ENCODE measurements at regions of chr9 and their contacts with region 1.

Region 1: GRCh38 chr9:129177791-129178559 is at the start of gene IER5L:
- DNase-seq: peak; percentile 96
- ATAC-seq: peak; percentile 85
- H3K4me3 Mint-ChIP-seq: peak within 1 kb of the TSS; percentile 82
- H3K27ac Mint-ChIP-seq: peak within 1 kb of the TSS; percentile 63
- H3K4me1 Mint-ChIP-seq: peaks cover 9% of the 10 kb centered on the region
- H3K27me3 Mint-ChIP-seq: peaks cover 9% of the 10 kb centered on the region
- total RNA-seq, gene IER5L: 4.9 to 6.1 TPM

Region 2: GRCh38 chr9:129139993-129140396 is 38.0 kb before region 1 on chr9:
- CTCF ChIA-PET with region 1: interaction called, 249 read pairs
- DNase-seq: peak; percentile 93
- ATAC-seq: peak; percentile 86
- H3K4me3 Mint-ChIP-seq: peak overlapping the region; percentile 75
- H3K27ac Mint-ChIP-seq: peak overlapping the region; percentile 97
- H3K4me1 Mint-ChIP-seq: peaks cover 45% of the 10 kb centered on the region
- H3K27me3 Mint-ChIP-seq: no peaks in the 10 kb centered on the region

Region 3: DNA sequence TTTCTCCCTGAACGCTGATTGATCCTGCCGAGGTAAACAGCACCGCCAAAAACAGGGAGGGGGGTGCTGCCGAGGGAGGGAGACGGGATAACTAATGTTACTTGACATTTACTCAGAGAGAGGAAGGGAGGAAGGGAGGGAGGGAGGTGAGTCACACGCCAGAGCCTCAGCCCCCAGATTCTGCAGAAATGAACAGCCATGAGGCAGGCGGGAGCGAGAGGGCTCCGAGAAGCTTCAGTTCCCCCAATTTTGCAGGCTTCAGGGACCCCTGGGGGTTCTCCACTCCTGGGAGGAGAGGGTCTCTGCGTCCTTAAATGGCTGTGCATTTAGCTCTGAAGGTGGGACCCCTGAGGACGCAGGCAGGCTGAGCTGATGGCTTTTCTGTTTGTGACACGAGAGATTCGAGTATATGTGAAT is 59.2 kb after region 1 on chr9:
- CTCF ChIA-PET with region 1: interaction called, 28 read pairs
- DNase-seq: peak; percentile 66
- ATAC-seq: peak; percentile 68
- H3K4me3 Mint-ChIP-seq: peak overlapping the region; percentile 57
- H3K27ac Mint-ChIP-seq: peak overlapping the region; percentile 82
- H3K4me1 Mint-ChIP-seq: peaks cover 53% of the 10 kb centered on the region
- H3K27me3 Mint-ChIP-seq: no peaks in the 10 kb centered on the region

Region 4: GRCh38 chr9:129335464-129336122 is 157.6 kb after region 1 on chr9:
- CTCF ChIA-PET with region 1: no interaction called
- DNase-seq: no peak
- ATAC-seq: no peak
- H3K4me3 Mint-ChIP-seq: no peak overlapping the region
- H3K27ac Mint-ChIP-seq: no peak overlapping the region
- H3K4me1 Mint-ChIP-seq: peaks cover 2% of the 10 kb centered on the region
- H3K27me3 Mint-ChIP-seq: peaks cover 22% of the 10 kb centered on the region

Region 5: DNA sequence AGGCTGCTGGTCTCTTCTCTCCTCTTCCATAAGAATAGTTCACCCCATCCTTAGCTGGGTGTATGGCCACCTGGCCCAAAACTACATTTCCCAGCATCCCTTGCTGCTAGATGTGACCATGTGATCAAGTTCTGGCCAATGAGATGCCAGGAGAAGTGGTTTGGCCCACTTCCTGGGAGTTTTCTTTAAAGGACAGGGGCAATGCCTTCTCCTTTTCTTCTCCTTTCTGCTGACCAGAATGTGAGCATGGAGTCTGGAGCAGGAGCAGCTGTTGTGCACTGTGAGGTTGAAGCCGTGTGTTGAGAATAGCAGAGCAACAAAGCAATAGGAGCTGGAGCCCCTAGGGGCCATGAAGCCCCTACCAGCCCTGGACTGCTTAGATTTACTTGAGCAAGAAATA is 406.2 kb after region 1 on chr9:
- CTCF ChIA-PET with region 1: interaction called, 12 read pairs
- DNase-seq: peak; percentile 86
- ATAC-seq: peak; percentile 59
- H3K4me3 Mint-ChIP-seq: no peak overlapping the region
- H3K27ac Mint-ChIP-seq: peak overlapping the region; percentile 85
- H3K4me1 Mint-ChIP-seq: peaks cover 67% of the 10 kb centered on the region
- H3K27me3 Mint-ChIP-seq: peaks cover 5% of the 10 kb centered on the region

Region 6: DNA sequence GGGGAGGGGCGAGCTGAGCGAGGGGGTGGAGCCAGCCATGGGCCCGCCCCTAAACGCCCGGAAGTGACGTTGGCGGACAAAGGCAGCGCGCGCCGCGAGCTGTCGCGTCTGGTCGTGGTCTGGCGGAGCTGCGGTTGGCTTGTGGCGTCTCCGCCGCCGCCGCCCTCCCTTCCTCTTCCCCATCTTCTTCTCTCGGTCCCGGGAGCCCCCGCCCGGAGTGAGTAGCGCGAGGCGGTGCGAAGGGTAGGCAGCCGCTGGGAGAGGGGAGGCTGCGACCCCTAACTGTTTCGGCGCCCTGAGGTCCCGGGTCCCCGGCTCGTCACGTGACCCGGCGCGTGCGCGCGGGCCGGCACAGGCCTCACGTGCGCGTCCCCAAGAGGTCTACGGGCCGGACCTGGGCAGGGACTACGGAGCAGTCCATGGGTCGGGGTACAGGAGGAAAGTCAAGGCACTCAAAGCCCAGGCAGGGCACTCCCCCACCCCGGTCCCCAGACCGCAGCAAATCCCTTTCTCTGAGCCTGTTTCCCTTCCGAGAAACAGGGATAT is 448.2 kb after region 1 on chr9 and contains the start of gene NTMT1:
- CTCF ChIA-PET with region 1: interaction called, 41 read pairs
- DNase-seq: peak; percentile 91
- ATAC-seq: peak; percentile 74
- H3K4me3 Mint-ChIP-seq: peak within 1 kb of the TSS; percentile 80
- H3K27ac Mint-ChIP-seq: peak within 1 kb of the TSS; percentile 93
- H3K4me1 Mint-ChIP-seq: peaks cover 62% of the 10 kb centered on the region
- H3K27me3 Mint-ChIP-seq: peaks cover 8% of the 10 kb centered on the region
- total RNA-seq, gene NTMT1: 37.2 to 46.2 TPM

Measured in activated CD8-positive, alpha-beta memory T cell treated with anti-CD3 and anti-CD28 coated beads, Interleukin-2, amount 10 ng/mL, durations not matched to agents 7 days and 5 days (primary cell).